Caco-2 (cell line): ENCODE measurements at regions of chr11 and their contacts with region 1.

Region 1: GRCh38 chr11:8006349-8006977 is 19.3 kb downstream of the EIF3F start:
- DNase-seq: peak; percentile 70 to 78
- H3K4me3 ChIP-seq: no peak overlapping the region
- H3K4me3 Mint-ChIP-seq: no peak overlapping the region
- H3K27ac Mint-ChIP-seq: no peak overlapping the region
- H3K4me1 ChIP-seq: no peaks in the 10 kb centered on the region
- H3K4me1 Mint-ChIP-seq: no peaks in the 10 kb centered on the region
- H3K27me3 ChIP-seq: no peaks in the 10 kb centered on the region
- H3K27me3 Mint-ChIP-seq: peaks cover 8% of the 10 kb centered on the region
- CTCF ChIP-seq: peak; percentile 85 to 95

Region 2: GRCh38 chr11:8033305-8034105 is 27.0 kb after region 1 on chr11:
- CTCF ChIA-PET with region 1: interaction called, 29 read pairs
- POLR2A ChIA-PET with region 1: no interaction called
- intact Hi-C with region 1: loop called (anchors 1 kb)
- DNase-seq: peak; percentile 60 to 69
- H3K4me3 ChIP-seq: no peak overlapping the region
- H3K4me3 Mint-ChIP-seq: peak overlapping the region; percentile 16
- H3K27ac Mint-ChIP-seq: no peak overlapping the region
- H3K4me1 ChIP-seq: no peaks in the 10 kb centered on the region
- H3K4me1 Mint-ChIP-seq: no peaks in the 10 kb centered on the region
- H3K27me3 ChIP-seq: no peaks in the 10 kb centered on the region
- H3K27me3 Mint-ChIP-seq: peaks cover 21% of the 10 kb centered on the region
- CTCF ChIP-seq: peak; percentile 80 to 94

Region 3: GRCh38 chr11:8070417-8071115 is 64.1 kb after region 1 on chr11:
- CTCF ChIA-PET with region 1: interaction called, 4 read pairs
- POLR2A ChIA-PET with region 1: no interaction called
- intact Hi-C with region 1: loop called (anchors 1 kb)
- DNase-seq: peak in 1 of 2 experiments; percentile 33
- H3K4me3 ChIP-seq: no peak overlapping the region
- H3K4me3 Mint-ChIP-seq: no peak overlapping the region
- H3K27ac Mint-ChIP-seq: no peak overlapping the region
- H3K4me1 ChIP-seq: no peaks in the 10 kb centered on the region
- H3K4me1 Mint-ChIP-seq: no peaks in the 10 kb centered on the region
- H3K27me3 ChIP-seq: no peaks in the 10 kb centered on the region; the same call in 1 of the 2 replicates
- H3K27me3 Mint-ChIP-seq: peaks cover 14% of the 10 kb centered on the region
- CTCF ChIP-seq: peak; percentile 24 to 44

Region 4: GRCh38 chr11:8092587-8093424 is 86.3 kb after region 1 on chr11:
- CTCF ChIA-PET with region 1: interaction called, 213 read pairs
- POLR2A ChIA-PET with region 1: no interaction called
- intact Hi-C with region 1: loop called (anchors 1 kb)
- DNase-seq: peak; percentile 61 to 64
- H3K4me3 ChIP-seq: no peak overlapping the region
- H3K4me3 Mint-ChIP-seq: no peak overlapping the region
- H3K27ac Mint-ChIP-seq: no peak overlapping the region
- H3K4me1 ChIP-seq: no peaks in the 10 kb centered on the region
- H3K4me1 Mint-ChIP-seq: no peaks in the 10 kb centered on the region
- H3K27me3 ChIP-seq: no peaks in the 10 kb centered on the region
- H3K27me3 Mint-ChIP-seq: no peaks in the 10 kb centered on the region
- CTCF ChIP-seq: peak; percentile 25 to 37

Region 5: GRCh38 chr11:8099291-8099899 is 92.9 kb after region 1 on chr11:
- CTCF ChIA-PET with region 1: interaction called, 213 read pairs
- POLR2A ChIA-PET with region 1: interaction called, 4 read pairs
- intact Hi-C with region 1: loop called (anchors 1 kb)
- DNase-seq: peak; percentile 78 to 80
- H3K4me3 ChIP-seq: no peak overlapping the region
- H3K4me3 Mint-ChIP-seq: no peak overlapping the region
- H3K27ac Mint-ChIP-seq: no peak overlapping the region
- H3K4me1 ChIP-seq: no peaks in the 10 kb centered on the region
- H3K4me1 Mint-ChIP-seq: no peaks in the 10 kb centered on the region
- H3K27me3 ChIP-seq: no peaks in the 10 kb centered on the region
- H3K27me3 Mint-ChIP-seq: peaks cover 9% of the 10 kb centered on the region
- CTCF ChIP-seq: peak; percentile 79 to 88

Region 6: GRCh38 chr11:8192016-8192895 is 185.8 kb after region 1 on chr11:
- CTCF ChIA-PET with region 1: no interaction called
- POLR2A ChIA-PET with region 1: no interaction called
- intact Hi-C with region 1: loop called (anchors 10 kb)
- DNase-seq: peak; percentile 71 to 76
- H3K4me3 ChIP-seq: no peak overlapping the region
- H3K4me3 Mint-ChIP-seq: no peak overlapping the region
- H3K27ac Mint-ChIP-seq: no peak overlapping the region
- H3K4me1 ChIP-seq: no peaks in the 10 kb centered on the region
- H3K4me1 Mint-ChIP-seq: no peaks in the 10 kb centered on the region
- H3K27me3 ChIP-seq: no peaks in the 10 kb centered on the region; the same call in 1 of the 2 replicates
- H3K27me3 Mint-ChIP-seq: peaks cover 5% of the 10 kb centered on the region
- CTCF ChIP-seq: peak; percentile 84 to 93

Region 7: GRCh38 chr11:8566613-8567210 is 560.2 kb after region 1 on chr11:
- CTCF ChIA-PET with region 1: interaction called, 3 read pairs
- POLR2A ChIA-PET with region 1: no interaction called
- intact Hi-C with region 1: loop called (anchors 10 kb)
- DNase-seq: peak in 1 of 2 experiments; percentile 29
- H3K4me3 ChIP-seq: no peak overlapping the region
- H3K4me3 Mint-ChIP-seq: no peak overlapping the region
- H3K27ac Mint-ChIP-seq: no peak overlapping the region
- H3K4me1 ChIP-seq: no peaks in the 10 kb centered on the region
- H3K4me1 Mint-ChIP-seq: no peaks in the 10 kb centered on the region
- H3K27me3 ChIP-seq: no peaks in the 10 kb centered on the region; the same call in 1 of the 2 replicates
- H3K27me3 Mint-ChIP-seq: peaks cover 7% of the 10 kb centered on the region
- CTCF ChIP-seq: peak; percentile 39 to 65